Activated naive CD4-positive, alpha-beta T cell treated with anti-CD3 and anti-CD28 coated beads for 36 hours (primary cell): ENCODE measurements at regions of chr9 and their contacts with region 1.

Region 1: DNA sequence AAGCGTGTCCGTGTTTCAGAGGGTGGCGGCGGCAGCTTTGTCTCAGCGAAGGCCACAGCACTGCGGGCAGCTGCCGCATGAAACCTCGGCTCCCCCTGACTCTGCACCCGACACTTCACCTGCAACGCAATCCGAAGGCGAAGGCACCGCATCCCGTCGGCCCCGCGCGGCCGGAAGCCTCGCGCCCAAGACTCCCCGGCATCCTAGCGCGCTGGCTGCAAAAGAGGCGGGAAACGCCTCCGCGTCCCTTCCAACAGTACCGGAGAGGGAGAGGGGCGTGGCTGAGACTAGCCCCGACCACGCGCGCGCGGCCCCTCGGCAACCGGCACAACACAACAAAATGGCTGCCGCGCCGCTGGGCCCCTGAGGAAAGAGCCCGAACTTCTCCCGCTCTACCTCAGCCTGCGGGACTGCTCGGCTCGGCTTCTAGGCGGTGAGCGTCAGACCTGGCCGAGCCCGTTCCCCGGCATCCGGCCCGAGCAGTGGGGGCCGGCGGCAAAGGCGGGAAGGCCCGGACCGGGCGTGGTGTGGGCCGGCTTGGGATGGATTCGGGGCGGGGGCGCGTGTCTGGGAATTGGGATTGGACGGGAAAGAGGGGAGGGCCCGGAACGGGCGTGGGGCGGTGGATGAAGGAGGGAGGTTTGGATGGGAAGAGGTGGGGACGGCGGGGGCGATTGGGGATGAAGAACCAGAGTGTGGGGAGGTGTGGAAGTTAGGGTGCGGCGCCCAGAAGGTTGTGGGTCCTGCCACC is at the start of gene CNTRL:
- DNase-seq: peak; percentile 98
- H3K4me3 Mint-ChIP-seq: peak within 1 kb of the TSS; percentile 100
- H3K27ac Mint-ChIP-seq: peak within 1 kb of the TSS; percentile 94
- H3K4me1 Mint-ChIP-seq: peaks cover 47% of the 10 kb centered on the region
- H3K27me3 Mint-ChIP-seq: no peaks in the 10 kb centered on the region
- total RNA-seq, gene CNTRL: 59.4 to 63.6 TPM

Region 2: DNA sequence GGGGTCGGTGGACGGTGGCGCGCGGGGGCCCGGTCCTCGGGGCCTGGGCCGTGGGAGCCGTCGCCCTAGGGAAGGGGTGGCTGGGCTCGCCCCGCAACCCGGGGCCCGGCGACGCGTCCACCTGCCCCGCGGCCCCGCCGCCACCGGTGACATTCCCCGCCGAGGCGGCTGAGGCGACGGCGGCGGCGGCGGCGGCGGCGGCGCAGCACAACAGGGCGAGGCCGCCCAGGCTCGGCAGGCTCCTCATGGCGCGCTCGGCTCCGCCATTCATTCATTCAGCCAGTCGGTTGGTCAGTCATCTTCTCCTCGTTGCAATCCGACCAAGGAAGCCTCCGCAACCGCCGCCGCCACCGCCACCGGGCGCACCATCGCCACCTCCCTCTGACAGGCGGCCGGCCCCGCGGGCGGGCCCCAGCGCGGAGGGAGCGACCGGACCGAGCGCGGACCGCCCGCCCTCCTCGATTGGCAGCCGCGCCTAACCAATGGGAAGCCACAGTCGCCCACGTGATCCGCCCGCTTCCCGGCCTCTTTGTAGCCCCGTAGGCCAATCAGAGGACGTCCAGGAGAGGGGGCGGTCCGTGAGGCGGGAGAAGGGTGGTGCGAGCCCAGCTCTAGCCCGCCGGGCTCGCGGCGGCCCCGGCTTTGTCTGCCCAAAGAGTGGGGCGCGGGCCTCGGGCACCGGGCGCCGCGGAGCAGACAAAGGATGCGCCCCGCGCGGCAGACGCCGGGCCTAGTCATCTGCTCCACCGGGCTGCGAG is 360.5 kb before region 1 on chr9 and contains the start of gene MEGF9:
- CTCF ChIA-PET with region 1: no interaction called
- intact Hi-C with region 1: loop called (anchors 1 kb)
- DNase-seq: peak; percentile 99
- H3K4me3 Mint-ChIP-seq: peak within 1 kb of the TSS; percentile 84
- H3K27ac Mint-ChIP-seq: peak within 1 kb of the TSS; percentile 30
- H3K4me1 Mint-ChIP-seq: peaks cover 39% of the 10 kb centered on the region
- H3K27me3 Mint-ChIP-seq: no peaks in the 10 kb centered on the region
- total RNA-seq, gene MEGF9: 3.8 TPM

Region 3: DNA sequence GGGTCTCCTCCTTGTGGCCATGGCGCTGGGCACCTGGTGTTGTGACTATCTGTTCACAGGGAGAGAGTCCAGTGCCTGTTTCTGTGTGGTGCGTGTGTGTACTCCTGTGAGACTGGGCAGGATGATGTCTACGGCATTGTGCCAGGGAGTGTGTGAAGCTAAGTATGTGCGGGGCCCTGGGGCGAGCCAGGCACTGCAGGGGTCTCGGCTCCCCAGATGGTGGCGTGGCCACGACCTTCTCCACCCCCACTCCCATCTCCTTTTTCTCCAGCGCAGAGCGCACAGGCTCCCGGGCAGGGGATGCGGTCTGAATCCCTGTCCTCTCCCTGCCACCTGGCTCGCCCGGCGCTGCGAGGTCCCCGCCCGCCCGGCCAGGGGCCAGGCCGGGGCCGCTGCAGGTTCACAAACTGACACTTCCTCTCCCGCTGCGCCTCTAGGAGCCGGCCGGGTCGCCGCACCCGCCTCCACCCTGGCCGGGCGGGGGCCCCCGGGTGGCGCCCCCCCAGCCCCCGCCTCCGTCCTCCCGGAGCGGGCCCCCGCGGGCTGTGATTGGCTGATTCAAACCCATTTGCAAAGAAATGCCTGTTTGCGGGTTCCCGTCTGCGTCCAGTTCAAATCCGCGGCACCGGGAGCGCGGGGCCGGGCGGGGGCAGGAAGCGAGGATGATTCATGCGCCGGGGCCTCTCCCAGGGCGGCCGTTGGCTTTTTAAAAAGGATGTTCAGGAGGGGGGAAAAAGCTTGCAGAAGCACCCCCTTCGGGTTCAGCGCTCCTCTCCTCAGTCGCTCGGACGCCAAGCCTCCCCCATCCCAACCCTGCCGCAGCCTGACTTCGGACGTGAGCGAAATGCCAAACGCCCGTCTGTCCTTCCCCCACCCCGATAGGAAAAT is 198.6 kb before region 1 on chr9:
- CTCF ChIA-PET with region 1: no interaction called
- intact Hi-C with region 1: loop called (anchors 1 kb)
- DNase-seq: peak; percentile 98
- H3K4me3 Mint-ChIP-seq: peak overlapping the region; percentile 85
- H3K27ac Mint-ChIP-seq: peak overlapping the region; percentile 98
- H3K4me1 Mint-ChIP-seq: peaks cover 75% of the 10 kb centered on the region
- H3K27me3 Mint-ChIP-seq: no peaks in the 10 kb centered on the region

Region 4: DNA sequence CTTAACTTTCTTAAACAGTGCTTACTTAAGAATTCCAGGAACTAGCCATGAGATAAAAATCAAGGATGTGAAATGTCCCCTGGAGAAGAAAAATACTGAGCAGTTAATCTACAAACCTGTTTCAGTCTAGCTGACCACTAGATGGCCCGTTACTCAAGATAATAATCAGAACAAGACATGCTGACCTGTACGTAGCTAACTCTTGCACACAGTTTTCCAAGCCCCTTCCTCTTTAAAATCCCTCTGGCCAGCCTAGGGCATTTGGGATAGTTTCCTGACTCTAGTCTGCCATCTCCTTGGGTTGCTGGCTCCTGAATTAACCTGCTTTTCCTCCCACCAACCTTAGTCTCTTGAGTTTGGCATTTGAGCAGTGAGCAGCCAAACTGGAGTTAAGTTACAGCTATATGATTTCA is 89.0 kb before region 1 on chr9:
- CTCF ChIA-PET with region 1: interaction called, 6 read pairs
- intact Hi-C with region 1: loop called (anchors 1 kb)
- DNase-seq: peak; percentile 13
- H3K4me3 Mint-ChIP-seq: no peak overlapping the region
- H3K27ac Mint-ChIP-seq: no peak overlapping the region
- H3K4me1 Mint-ChIP-seq: peaks cover 2% of the 10 kb centered on the region
- H3K27me3 Mint-ChIP-seq: no peaks in the 10 kb centered on the region

Region 5: GRCh38 chr9:121048618-121049017 is 26.2 kb before region 1 on chr9:
- CTCF ChIA-PET with region 1: no interaction called
- intact Hi-C with region 1: no loop called
- DNase-seq: no peak
- H3K4me3 Mint-ChIP-seq: no peak overlapping the region
- H3K27ac Mint-ChIP-seq: no peak overlapping the region
- H3K4me1 Mint-ChIP-seq: no peaks in the 10 kb centered on the region
- H3K27me3 Mint-ChIP-seq: no peaks in the 10 kb centered on the region

Region 6: DNA sequence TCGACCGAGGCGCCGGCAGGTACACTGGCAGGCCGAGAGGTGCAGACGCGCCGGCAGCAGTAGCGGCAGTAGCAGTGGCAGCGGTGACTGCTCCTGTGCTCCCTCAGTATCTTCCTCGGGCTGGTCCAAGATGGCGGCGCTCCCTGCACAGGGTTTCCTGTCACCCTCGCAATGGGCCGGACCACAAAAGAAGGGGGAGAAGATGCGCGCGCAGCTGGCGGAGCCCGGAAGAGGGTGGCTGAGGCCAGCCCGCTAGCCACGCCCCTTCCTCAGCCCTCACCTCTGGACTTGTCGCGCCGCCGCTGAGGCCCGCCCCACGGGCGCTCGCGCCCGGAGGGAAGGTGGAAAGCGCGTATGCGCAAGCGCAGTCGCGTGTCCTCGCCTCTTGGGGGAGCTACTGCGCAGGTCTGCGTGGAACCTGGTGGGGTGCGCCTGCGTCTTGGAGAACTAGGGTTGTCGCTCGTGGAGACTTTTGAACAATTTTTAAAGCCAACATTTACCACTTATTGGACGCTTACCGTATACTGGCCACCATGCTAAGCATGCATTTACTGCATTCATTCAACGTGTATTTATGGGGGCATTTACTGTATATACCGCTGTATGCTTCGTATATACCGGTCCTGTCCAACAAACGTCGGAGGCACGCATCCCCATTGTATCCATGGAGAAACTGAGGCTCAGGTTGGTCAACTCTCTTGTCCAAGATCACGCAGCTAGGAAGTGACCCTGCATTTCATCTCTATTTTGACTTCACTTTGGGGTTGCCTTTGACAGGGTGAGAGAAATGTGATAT is 127.1 kb after region 1 on chr9 and contains the start of gene RAB14:
- CTCF ChIA-PET with region 1: no interaction called
- intact Hi-C with region 1: loop called (anchors 1 kb)
- DNase-seq: peak; percentile 100
- H3K4me3 Mint-ChIP-seq: peak within 1 kb of the TSS; percentile 91
- H3K27ac Mint-ChIP-seq: peak within 1 kb of the TSS; percentile 95
- H3K4me1 Mint-ChIP-seq: peaks cover 42% of the 10 kb centered on the region
- H3K27me3 Mint-ChIP-seq: no peaks in the 10 kb centered on the region
- total RNA-seq, gene RAB14: 61.1 to 64.2 TPM

Region 7: GRCh38 chr9:121483049-121483448 is 408.2 kb after region 1 on chr9:
- CTCF ChIA-PET with region 1: no interaction called
- intact Hi-C with region 1: no loop called
- DNase-seq: no peak
- H3K4me3 Mint-ChIP-seq: no peak overlapping the region
- H3K27ac Mint-ChIP-seq: no peak overlapping the region
- H3K4me1 Mint-ChIP-seq: no peaks in the 10 kb centered on the region
- H3K27me3 Mint-ChIP-seq: no peaks in the 10 kb centered on the region